Posterior vena cava (tissue), 2 donors: ENCODE measurements at regions of chr5 and their contacts with region 1.

Region 1: GRCh38 chr5:1246711-1247431 is 21.7 kb downstream of the SLC6A18 start:
- DNase-seq: no peak

Region 2: DNA sequence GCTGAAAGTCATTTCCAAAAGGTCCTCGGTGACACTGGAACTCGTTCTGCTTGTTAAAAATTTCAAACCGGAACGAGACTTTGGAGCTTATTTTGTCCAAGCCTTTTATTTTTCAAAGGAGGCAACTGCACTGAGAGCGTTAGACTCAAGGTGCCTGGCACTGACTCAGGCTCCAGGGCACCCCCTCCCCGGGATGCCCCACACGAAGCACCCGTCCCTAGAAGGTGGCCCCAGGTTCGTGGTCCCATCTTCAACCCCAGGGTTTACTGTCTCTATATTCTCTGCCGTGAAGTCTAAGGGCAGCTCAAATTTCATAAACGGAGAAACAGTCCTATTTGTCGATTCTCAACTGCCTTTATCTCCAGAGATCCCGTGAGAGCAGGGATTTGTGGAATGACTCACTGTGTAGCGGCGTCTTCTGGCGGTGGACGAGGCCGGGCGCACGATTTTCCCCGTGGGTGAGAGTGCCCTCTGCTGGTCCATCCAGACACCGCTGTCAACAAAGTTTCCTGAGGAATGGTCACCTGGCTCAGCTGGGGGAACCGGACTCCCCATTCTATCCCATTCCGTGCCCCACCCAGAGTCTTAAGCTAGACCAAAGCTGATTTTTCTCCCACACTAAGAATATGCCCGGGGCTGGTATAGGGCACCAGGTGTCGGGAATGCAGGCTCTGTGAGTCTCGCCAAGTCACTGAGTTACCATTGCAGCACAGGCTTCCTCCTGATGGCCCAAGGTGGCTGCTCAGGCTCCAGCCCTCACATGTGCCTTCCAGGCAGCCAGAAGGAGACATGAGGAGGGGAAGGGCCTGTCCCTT is 72.5 kb before region 1 on chr5:
- intact Hi-C with region 1: no loop called
- DNase-seq: peak; percentile 90

Region 3: DNA sequence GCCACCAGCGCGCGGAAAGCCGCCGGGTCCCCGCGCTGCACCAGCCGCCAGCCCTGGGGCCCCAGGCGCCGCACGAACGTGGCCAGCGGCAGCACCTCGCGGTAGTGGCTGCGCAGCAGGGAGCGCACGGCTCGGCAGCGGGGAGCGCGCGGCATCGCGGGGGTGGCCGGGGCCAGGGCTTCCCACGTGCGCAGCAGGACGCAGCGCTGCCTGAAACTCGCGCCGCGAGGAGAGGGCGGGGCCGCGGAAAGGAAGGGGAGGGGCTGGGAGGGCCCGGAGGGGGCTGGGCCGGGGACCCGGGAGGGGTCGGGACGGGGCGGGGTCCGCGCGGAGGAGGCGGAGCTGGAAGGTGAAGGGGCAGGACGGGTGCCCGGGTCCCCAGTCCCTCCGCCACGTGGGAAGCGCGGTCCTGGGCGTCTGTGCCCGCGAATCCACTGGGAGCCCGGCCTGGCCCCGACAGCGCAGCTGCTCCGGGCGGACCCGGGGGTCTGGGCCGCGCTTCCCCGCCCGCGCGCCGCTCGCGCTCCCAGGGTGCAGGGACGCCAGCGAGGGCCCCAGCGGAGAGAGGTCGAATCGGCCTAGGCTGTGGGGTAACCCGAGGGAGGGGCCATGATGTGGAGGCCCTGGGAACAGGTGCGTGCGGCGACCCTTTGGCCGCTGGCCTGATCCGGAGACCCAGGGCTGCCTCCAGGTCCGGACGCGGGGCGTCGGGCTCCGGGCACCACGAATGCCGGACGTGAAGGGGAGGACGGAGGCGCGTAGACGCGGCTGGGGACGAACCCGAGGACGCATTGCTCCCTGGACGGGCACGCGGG is 48.2 kb after region 1 on chr5 and contains the start of gene TERT:
- intact Hi-C with region 1: loop called in 1 of 2 experiments (anchors 1 kb)
- DNase-seq: peak; percentile 67
- total RNA-seq, gene TERT: 0.14 TPM in 1 of 2 donors, not detected in the other

Region 4: GRCh38 chr5:1809416-1810035 is 562.7 kb after region 1 on chr5:
- intact Hi-C with region 1: loop called in 1 of 2 experiments (anchors 5 kb)
- DNase-seq: no peak